ENCODE measurements at regions of chr3 and their contacts with region 1.

Region 1: DNA sequence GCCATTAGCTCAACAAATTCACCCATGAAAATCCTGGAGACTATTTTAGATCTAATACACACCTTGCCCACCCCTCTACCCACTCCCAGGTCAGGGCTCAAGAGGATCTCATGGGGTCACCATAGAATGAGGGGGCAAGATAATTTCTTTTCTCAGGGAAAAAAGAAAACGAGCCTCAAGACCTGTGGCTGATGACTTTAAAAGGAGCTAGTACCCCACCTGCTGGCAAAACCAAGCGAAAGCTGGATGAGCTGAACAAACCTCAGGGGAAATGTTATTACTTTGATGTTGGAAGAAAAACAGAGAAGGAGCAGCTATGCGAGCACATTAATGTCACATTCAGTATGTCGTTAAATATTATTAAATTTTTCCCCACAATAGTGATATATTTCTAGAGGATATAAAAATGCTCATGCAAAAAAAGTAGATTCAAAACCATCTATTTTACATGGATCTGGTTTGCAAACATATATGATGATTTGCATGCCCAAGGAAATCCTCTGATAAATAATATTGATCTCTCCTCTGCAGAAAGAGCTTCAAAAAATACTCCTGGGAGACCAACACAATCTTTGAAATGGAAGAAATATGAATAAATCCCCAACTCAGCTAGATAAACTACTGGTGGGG is 37.7 kb downstream of the PLD1 start:
- DNase-seq: no peak
- ATAC-seq: peak; percentile 62
- H3K4me3 ChIP-seq: no peak overlapping the region
- H3K27ac ChIP-seq: no peak overlapping the region
- H3K4me1 ChIP-seq: no peaks in the 10 kb centered on the region
- H3K27me3 ChIP-seq: no peaks in the 10 kb centered on the region
- CTCF ChIP-seq: peak; percentile 63 to 79 (median 70)
- EP300 ChIP-seq: no peak
- POLR2A ChIP-seq: no peak
- RAD21 ChIP-seq: peak; percentile 80

Region 2: GRCh38 chr3:171574556-171575240 is 197.8 kb before region 1 on chr3:
- CTCF ChIA-PET with region 1: interaction called, 6 read pairs
- POLR2A ChIA-PET with region 1: no interaction called
- RAD21 ChIA-PET with region 1: interaction called, 6 read pairs
- SMC1A ChIA-PET with region 1: interaction called, 13 read pairs
- in situ Hi-C with region 1: no loop called
- intact Hi-C with region 1: no loop called
- DNase-seq: no peak
- ATAC-seq: peak; percentile 17; the same call in 1 of the 3 replicates
- H3K4me3 ChIP-seq: no peak overlapping the region
- H3K27ac ChIP-seq: no peak overlapping the region
- H3K4me1 ChIP-seq: no peaks in the 10 kb centered on the region
- H3K27me3 ChIP-seq: no peaks in the 10 kb centered on the region
- CTCF ChIP-seq: no peak
- EP300 ChIP-seq: no peak
- POLR2A ChIP-seq: no peak
- RAD21 ChIP-seq: no peak

Region 3: DNA sequence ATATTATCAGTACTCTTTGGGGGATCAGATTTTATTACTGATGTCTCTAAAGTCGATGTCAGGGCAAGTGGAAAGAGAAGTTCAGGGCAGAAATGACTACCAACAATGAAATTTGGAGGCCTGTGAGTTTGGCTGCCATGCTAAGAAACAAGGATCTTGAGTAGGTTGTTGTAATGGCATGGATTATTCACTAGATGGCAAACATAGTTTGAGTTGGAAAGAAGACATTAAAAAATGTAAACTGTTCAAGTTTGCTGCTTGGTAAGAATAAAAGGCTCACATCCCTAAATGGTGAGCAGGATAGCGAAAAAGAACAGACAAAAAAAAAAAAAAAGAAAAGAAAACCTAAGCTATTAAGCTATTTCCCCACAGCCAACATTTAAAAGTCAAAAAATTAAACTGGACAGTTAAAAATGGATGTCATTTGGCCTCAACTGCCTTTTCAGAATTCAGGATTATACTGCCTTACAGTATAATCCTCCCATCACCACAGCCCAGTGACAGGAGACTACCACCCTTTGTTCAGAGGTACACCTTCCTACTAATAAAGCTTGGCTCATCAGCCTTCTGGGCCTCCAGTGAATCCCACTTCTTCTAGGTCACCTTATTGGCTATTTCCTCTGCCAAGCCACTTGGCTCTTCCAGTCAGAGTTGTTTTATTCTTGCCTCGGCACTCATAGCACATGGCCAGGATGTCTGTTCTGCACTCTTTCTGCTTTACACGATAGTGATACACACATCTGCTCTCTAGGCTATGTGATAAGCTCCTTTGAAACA is 126.0 kb before region 1 on chr3:
- CTCF ChIA-PET with region 1: interaction called, 63 read pairs
- POLR2A ChIA-PET with region 1: no interaction called
- RAD21 ChIA-PET with region 1: interaction called, 34 read pairs
- SMC1A ChIA-PET with region 1: interaction called, 54 read pairs
- in situ Hi-C with region 1: loop called (anchors 5 kb)
- intact Hi-C with region 1: loop called (anchors 1 kb)
- DNase-seq: no peak
- ATAC-seq: peak; percentile 70
- H3K4me3 ChIP-seq: no peak overlapping the region
- H3K27ac ChIP-seq: no peak overlapping the region
- H3K4me1 ChIP-seq: no peaks in the 10 kb centered on the region
- H3K27me3 ChIP-seq: no peaks in the 10 kb centered on the region
- CTCF ChIP-seq: peak; percentile 44 to 67 (median 55)
- EP300 ChIP-seq: no peak
- POLR2A ChIP-seq: no peak
- RAD21 ChIP-seq: peak; percentile 80

Region 4: GRCh38 chr3:171690281-171690680 is 82.3 kb before region 1 on chr3:
- CTCF ChIA-PET with region 1: interaction called, 23 read pairs
- POLR2A ChIA-PET with region 1: interaction called, 7 read pairs
- RAD21 ChIA-PET with region 1: interaction called, 33 read pairs
- SMC1A ChIA-PET with region 1: interaction called, 46 read pairs
- in situ Hi-C with region 1: no loop called
- intact Hi-C with region 1: no loop called
- DNase-seq: peak; percentile 21
- ATAC-seq: peak; percentile 74
- H3K4me3 ChIP-seq: no peak overlapping the region
- H3K27ac ChIP-seq: peak overlapping the region; percentile 23
- H3K4me1 ChIP-seq: peaks cover 3% of the 10 kb centered on the region; the same call in 1 of the 2 replicates
- H3K27me3 ChIP-seq: no peaks in the 10 kb centered on the region
- CTCF ChIP-seq: no peak
- EP300 ChIP-seq: no peak
- POLR2A ChIP-seq: no peak
- RAD21 ChIP-seq: no peak

Region 5: DNA sequence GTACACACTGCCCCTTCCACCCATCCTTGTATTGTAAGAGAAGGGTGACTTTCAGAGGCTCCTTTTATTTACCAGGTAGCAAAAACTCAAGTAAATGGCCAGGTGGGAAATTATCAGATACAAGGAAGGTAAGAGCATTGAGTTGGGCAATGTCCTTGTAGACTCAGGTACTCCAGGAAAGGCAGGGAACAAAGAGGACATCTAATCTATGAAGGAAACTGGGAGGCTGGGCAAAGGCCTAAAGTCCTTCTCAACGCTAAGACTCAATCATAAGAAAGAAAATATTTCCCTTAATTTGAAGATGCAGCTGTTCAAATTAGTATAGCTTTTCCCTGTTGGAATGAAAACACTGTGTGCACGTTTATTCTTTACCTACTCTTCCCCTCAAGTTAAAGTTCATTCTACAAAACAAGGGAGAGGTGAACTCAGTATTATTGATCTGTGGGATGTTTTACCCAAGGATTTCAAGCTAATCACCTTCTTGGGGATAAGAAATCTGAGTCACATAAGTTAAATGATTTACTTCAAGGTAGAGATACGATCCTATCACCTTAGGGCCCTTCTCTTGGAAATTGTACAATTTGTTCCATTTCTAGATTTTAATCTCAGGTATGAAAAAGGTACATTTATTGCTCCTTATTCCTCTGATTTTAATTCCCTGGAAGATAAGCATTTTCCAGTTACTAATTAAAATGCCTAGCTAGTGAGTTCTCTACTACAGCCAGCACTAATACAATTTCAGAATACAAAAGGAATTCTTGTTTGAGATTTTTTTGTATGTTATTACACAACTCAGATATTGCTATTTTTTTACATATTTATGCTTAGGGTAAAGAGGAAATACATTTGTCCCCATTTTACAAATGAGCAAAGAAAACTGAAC is 42.8 kb before region 1 on chr3:
- CTCF ChIA-PET with region 1: interaction called, 13 read pairs
- POLR2A ChIA-PET with region 1: no interaction called
- RAD21 ChIA-PET with region 1: interaction called, 11 read pairs
- SMC1A ChIA-PET with region 1: interaction called, 11 read pairs
- in situ Hi-C with region 1: no loop called
- intact Hi-C with region 1: no loop called
- DNase-seq: no peak
- ATAC-seq: no peak
- H3K4me3 ChIP-seq: no peak overlapping the region
- H3K27ac ChIP-seq: no peak overlapping the region
- H3K4me1 ChIP-seq: no peaks in the 10 kb centered on the region
- H3K27me3 ChIP-seq: no peaks in the 10 kb centered on the region
- CTCF ChIP-seq: no peak
- EP300 ChIP-seq: no peak
- POLR2A ChIP-seq: no peak
- RAD21 ChIP-seq: no peak

Region 6: GRCh38 chr3:171788546-171789351 is 16.2 kb after region 1 on chr3:
- CTCF ChIA-PET with region 1: interaction called, 87 read pairs
- POLR2A ChIA-PET with region 1: interaction called, 13 read pairs
- RAD21 ChIA-PET with region 1: interaction called, 93 read pairs
- SMC1A ChIA-PET with region 1: interaction called, 187 read pairs
- in situ Hi-C with region 1: no loop called
- intact Hi-C with region 1: no loop called
- DNase-seq: no peak
- ATAC-seq: peak; percentile 10
- H3K4me3 ChIP-seq: no peak overlapping the region
- H3K27ac ChIP-seq: no peak overlapping the region
- H3K4me1 ChIP-seq: no peaks in the 10 kb centered on the region; the same call in 1 of the 2 replicates
- H3K27me3 ChIP-seq: no peaks in the 10 kb centered on the region
- CTCF ChIP-seq: peak in 1 of 3 experiments; percentile 18; a peak in 1 of 6 replicates
- EP300 ChIP-seq: peak; percentile 69 to 92; a peak in 3 of 4 replicates
- POLR2A ChIP-seq: no peak
- RAD21 ChIP-seq: no peak

Region 7: GRCh38 chr3:171829841-171830517 is 57.4 kb after region 1 on chr3:
- CTCF ChIA-PET with region 1: interaction called, 274 read pairs
- POLR2A ChIA-PET with region 1: interaction called, 14 read pairs
- RAD21 ChIA-PET with region 1: interaction called, 333 read pairs
- SMC1A ChIA-PET with region 1: interaction called, 154 read pairs
- in situ Hi-C with region 1: no loop called
- intact Hi-C with region 1: loop called (anchors 1 kb)
- DNase-seq: no peak
- ATAC-seq: peak; percentile 85
- H3K4me3 ChIP-seq: no peak overlapping the region
- H3K27ac ChIP-seq: no peak overlapping the region
- H3K4me1 ChIP-seq: no peaks in the 10 kb centered on the region
- H3K27me3 ChIP-seq: no peaks in the 10 kb centered on the region; a peak in 1 of 4 replicates
- CTCF ChIP-seq: peak; percentile 52 to 80 (median 74)
- EP300 ChIP-seq: no peak
- POLR2A ChIP-seq: no peak
- RAD21 ChIP-seq: peak; percentile 53

Region 8: DNA sequence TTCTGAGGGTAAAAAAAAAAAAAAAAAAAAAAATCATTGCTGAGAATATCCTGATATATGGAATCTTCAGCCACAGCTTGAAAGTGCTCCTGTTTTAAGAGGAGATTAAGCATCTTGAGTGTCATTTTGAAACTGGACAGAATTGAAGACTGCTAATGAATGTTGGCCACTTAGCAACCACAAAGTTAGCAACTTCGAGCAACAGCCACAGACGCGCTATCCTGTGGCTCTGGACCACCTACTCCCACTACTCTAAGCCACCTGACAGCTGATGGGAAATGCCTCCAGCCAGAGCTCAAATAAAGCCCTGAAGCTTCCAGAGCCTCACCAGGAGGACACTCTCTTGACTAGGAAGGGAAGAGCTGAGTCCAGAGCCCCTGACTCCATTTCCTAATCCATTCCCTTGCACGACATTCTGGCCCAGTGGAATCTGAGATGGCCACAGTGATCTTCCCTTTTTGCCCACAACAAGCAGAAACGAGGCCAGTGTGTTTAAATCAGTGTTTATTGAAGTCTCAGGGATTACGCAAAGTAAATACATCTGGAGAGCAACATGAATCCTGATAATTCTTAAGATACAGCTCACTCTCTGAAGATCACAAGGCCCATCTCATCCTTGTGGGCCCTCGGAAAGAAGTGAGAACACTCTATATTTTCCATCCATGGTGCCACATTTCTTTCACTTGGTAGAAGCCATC is 129.2 kb after region 1 on chr3:
- CTCF ChIA-PET with region 1: no interaction called
- POLR2A ChIA-PET with region 1: no interaction called
- RAD21 ChIA-PET with region 1: no interaction called
- SMC1A ChIA-PET with region 1: no interaction called
- in situ Hi-C with region 1: no loop called
- intact Hi-C with region 1: no loop called
- DNase-seq: no peak
- ATAC-seq: no peak
- H3K4me3 ChIP-seq: no peak overlapping the region
- H3K27ac ChIP-seq: no peak overlapping the region
- H3K4me1 ChIP-seq: no peaks in the 10 kb centered on the region
- H3K27me3 ChIP-seq: no peaks in the 10 kb centered on the region
- CTCF ChIP-seq: no peak
- EP300 ChIP-seq: no peak
- POLR2A ChIP-seq: no peak
- RAD21 ChIP-seq: no peak

Region 9: GRCh38 chr3:172323894-172324610 is 551.5 kb after region 1 on chr3:
- CTCF ChIA-PET with region 1: no interaction called
- POLR2A ChIA-PET with region 1: no interaction called
- RAD21 ChIA-PET with region 1: no interaction called
- SMC1A ChIA-PET with region 1: no interaction called
- in situ Hi-C with region 1: no loop called
- intact Hi-C with region 1: no loop called
- DNase-seq: no peak
- ATAC-seq: peak; percentile 50
- H3K4me3 ChIP-seq: no peak overlapping the region
- H3K27ac ChIP-seq: no peak overlapping the region
- H3K4me1 ChIP-seq: no peaks in the 10 kb centered on the region
- H3K27me3 ChIP-seq: no peaks in the 10 kb centered on the region
- CTCF ChIP-seq: no peak
- EP300 ChIP-seq: no peak
- POLR2A ChIP-seq: no peak
- RAD21 ChIP-seq: no peak

Measured in GM12878 (cell line).